Endothelial cell of umbilical vein (primary cell): ENCODE measurements at regions of chr11 and their contacts with region 1.

Region 1: DNA sequence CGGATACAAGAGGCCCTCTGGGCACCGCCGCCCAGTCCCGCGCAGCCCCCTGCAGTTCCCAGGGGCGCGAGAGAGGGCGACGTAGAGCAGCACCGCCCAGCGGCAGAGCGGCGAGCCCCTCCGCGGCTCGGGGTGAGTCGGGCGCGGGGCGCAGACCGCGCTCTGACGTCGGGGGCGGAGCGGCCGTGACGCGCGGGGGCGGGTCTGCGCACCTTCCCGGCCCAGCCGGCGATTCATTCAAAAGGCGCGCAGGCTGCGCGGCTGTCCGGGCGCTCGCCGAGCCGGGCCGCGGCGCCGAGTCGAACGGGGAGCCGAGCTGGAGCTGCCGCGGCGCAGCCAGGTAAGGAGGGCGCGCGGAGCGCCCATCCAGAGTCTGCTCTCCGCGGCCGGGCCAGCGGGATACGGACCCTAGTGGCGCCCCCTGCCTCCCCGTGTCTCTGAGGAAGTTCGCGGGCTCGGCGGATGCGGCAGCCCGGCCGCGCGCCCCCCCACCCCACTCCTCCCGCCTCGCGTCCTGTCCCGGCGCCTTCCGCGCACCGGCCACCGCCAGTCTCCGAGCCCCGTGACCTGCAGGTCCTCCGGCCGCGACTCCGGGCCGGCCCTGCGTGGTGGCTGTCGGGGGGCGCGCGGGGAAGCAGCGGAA is at the start of gene RELT:
- DNase-seq: peak; percentile 93
- H3K4me3 ChIP-seq: peak within 1 kb of the TSS; percentile 47 to 80 (median 49)
- H3K27ac ChIP-seq: peak within 1 kb of the TSS; percentile 75
- H3K4me1 ChIP-seq: peaks cover 2% of the 10 kb centered on the region
- H3K27me3 ChIP-seq: no peaks in the 10 kb centered on the region
- CTCF ChIP-seq: peak; percentile 87 to 95
- POLR2A ChIP-seq: peak; percentile 99
- total RNA-seq, gene RELT: 12.6 and 13.1 TPM in 2 replicates

Region 2: GRCh38 chr11:72821883-72822799 is 554.1 kb before region 1 on chr11:
- CTCF ChIA-PET with region 1: no interaction called
- POLR2A ChIA-PET with region 1: no interaction called
- dilution Hi-C with region 1: no loop called
- intact Hi-C with region 1: loop called (anchors 10 kb)
- DNase-seq: peak; percentile 91
- H3K4me3 ChIP-seq: peak overlapping the region in 2 of 3 experiments; percentile 42 to 43
- H3K27ac ChIP-seq: no peak overlapping the region
- H3K4me1 ChIP-seq: peaks cover 7% of the 10 kb centered on the region
- H3K27me3 ChIP-seq: no peaks in the 10 kb centered on the region
- CTCF ChIP-seq: peak; percentile 2 to 23
- POLR2A ChIP-seq: no peak

Region 3: GRCh38 chr11:73360336-73361013 is 15.8 kb before region 1 on chr11:
- CTCF ChIA-PET with region 1: interaction called, 17 read pairs
- POLR2A ChIA-PET with region 1: interaction called, 3 read pairs
- dilution Hi-C with region 1: no loop called
- intact Hi-C with region 1: no loop called
- DNase-seq: peak; percentile 36
- H3K4me3 ChIP-seq: no peak overlapping the region
- H3K27ac ChIP-seq: no peak overlapping the region
- H3K4me1 ChIP-seq: no peaks in the 10 kb centered on the region
- H3K27me3 ChIP-seq: no peaks in the 10 kb centered on the region
- CTCF ChIP-seq: peak; percentile 36 to 60
- POLR2A ChIP-seq: no peak

Region 4: DNA sequence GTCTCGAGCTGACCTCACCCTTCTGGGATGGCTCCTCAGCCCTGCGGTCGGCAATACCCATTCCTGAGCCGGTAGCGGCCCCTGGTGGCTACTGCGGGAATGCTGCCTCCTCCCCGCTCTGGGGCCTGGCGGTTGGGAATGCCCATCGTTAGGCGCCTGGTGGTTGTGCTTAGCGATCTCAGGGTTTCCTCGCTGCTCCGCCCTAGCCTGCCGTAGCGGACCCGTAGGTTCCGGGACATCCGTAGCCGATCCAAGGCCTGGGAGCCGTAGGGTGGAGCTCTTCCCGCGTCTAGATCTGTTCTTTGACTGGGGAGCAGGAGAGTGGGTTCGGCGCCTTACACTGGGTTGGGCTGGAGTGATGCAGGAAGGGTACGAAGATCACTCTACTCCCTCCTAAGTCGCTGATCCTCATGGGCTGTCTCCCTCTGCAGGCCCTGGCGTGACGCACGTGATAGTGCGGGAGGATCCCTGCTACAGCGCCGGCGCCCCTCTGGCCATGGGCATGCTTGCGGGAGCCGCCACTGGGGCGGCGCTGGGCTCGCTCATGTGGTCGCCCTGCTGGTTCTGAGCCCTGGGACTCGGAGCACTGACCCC is 284.9 kb after region 1 on chr11:
- CTCF ChIA-PET with region 1: interaction called, 7 read pairs
- POLR2A ChIA-PET with region 1: no interaction called
- dilution Hi-C with region 1: no loop called
- intact Hi-C with region 1: loop called (anchors 1 kb)
- DNase-seq: peak; percentile 84
- H3K4me3 ChIP-seq: peak overlapping the region in 2 of 3 experiments; percentile 26 to 32
- H3K27ac ChIP-seq: no peak overlapping the region
- H3K4me1 ChIP-seq: peaks cover 6% of the 10 kb centered on the region
- H3K27me3 ChIP-seq: no peaks in the 10 kb centered on the region
- CTCF ChIP-seq: peak; percentile 96 to 98
- POLR2A ChIP-seq: no peak